ENCODE measurements at regions of chr10 and their contacts with region 1.

Region 1: DNA sequence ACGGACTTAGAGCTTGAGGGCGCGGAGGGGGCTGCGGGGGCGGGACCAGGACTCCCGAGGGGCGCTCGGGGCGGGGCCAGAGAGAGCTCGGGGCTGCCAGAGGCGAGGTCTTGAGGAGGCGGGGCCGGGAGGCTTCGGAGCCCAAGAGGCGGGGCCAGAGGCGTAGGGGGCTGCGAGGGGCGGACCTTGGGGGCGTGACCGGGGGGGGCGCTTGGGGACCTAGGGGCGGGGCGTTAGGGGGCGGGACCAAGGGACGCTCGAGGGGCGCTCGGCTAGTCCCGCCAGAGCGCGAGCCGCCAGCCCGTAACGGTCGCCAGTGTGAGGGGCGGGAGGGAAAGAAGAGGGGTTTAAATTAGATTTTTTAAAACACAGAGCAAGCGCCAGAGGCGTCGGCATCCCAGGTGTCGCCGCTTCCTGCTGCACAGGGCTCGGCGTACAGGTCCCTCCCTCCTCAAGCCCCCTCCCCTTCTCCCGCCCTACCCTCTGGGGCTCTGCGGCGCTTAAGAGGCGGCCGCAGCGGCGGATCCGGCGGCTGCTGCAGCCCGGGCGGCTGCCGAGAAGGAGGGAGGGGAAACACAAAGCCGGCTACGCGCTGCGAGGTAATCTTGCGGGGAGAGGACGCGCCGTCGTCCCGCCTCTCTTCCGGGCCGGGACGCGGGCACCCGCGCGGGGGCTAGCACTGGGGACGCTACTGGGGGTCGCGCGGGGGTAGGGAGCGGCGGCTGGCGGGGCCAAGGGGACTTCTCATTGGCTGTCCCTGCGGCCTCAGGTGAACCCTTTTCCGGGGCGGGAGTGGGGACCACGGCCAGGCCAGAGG is at the start of gene ADD3:
- DNase-seq: peak; percentile 95
- ATAC-seq: peak; percentile 86
- H3K4me3 ChIP-seq: peak within 1 kb of the TSS; percentile 73 to 95 (median 76)
- H3K4me3 Mint-ChIP-seq: no peak within 1 kb of the TSS
- H3K27ac ChIP-seq: peak within 1 kb of the TSS; percentile 72 to 91
- H3K27ac Mint-ChIP-seq: no peak within 1 kb of the TSS
- H3K4me1 ChIP-seq: peaks cover 33 to 40% of the 10 kb centered on the region in 2 donors
- H3K4me1 Mint-ChIP-seq: peaks cover 49% of the 10 kb centered on the region
- H3K27me3 ChIP-seq: no peaks in the 10 kb centered on the region
- H3K27me3 Mint-ChIP-seq: no peaks in the 10 kb centered on the region
- CTCF ChIP-seq: no peak
- total RNA-seq, gene ADD3: 156 and 191 TPM in 2 replicates

Region 2: GRCh38 chr10:109624939-109625338 is 383.0 kb before region 1 on chr10:
- CTCF ChIA-PET with region 1: no interaction called
- POLR2A ChIA-PET with region 1: no interaction called
- intact Hi-C with region 1: no loop called
- DNase-seq: no peak
- ATAC-seq: no peak
- H3K4me3 ChIP-seq: no peak overlapping the region
- H3K4me3 Mint-ChIP-seq: no peak overlapping the region
- H3K27ac ChIP-seq: no peak overlapping the region
- H3K27ac Mint-ChIP-seq: no peak overlapping the region
- H3K4me1 ChIP-seq: no peaks in the 10 kb centered on the region
- H3K4me1 Mint-ChIP-seq: no peaks in the 10 kb centered on the region
- H3K27me3 ChIP-seq: no peaks in the 10 kb centered on the region
- H3K27me3 Mint-ChIP-seq: no peaks in the 10 kb centered on the region
- CTCF ChIP-seq: no peak

Region 3: GRCh38 chr10:109866168-109866994 is 141.5 kb before region 1 on chr10:
- CTCF ChIA-PET with region 1: no interaction called
- POLR2A ChIA-PET with region 1: no interaction called
- intact Hi-C with region 1: no loop called
- DNase-seq: no peak
- ATAC-seq: no peak
- H3K4me3 ChIP-seq: no peak overlapping the region
- H3K4me3 Mint-ChIP-seq: no peak overlapping the region
- H3K27ac ChIP-seq: no peak overlapping the region
- H3K27ac Mint-ChIP-seq: no peak overlapping the region
- H3K4me1 ChIP-seq: no peaks in the 10 kb centered on the region
- H3K4me1 Mint-ChIP-seq: no peaks in the 10 kb centered on the region
- H3K27me3 ChIP-seq: no peaks in the 10 kb centered on the region
- H3K27me3 Mint-ChIP-seq: no peaks in the 10 kb centered on the region
- CTCF ChIP-seq: no peak

Region 4: GRCh38 chr10:109956454-109957091 is 51.3 kb before region 1 on chr10:
- CTCF ChIA-PET with region 1: no interaction called
- POLR2A ChIA-PET with region 1: no interaction called
- intact Hi-C with region 1: loop called (anchors 2 kb)
- DNase-seq: peak; percentile 62
- ATAC-seq: peak; percentile 85
- H3K4me3 ChIP-seq: no peak overlapping the region
- H3K4me3 Mint-ChIP-seq: peak overlapping the region; percentile 5
- H3K27ac ChIP-seq: no peak overlapping the region
- H3K27ac Mint-ChIP-seq: no peak overlapping the region
- H3K4me1 ChIP-seq: peaks cover 0 to 9% of the 10 kb centered on the region in 2 donors
- H3K4me1 Mint-ChIP-seq: peaks cover 12% of the 10 kb centered on the region
- H3K27me3 ChIP-seq: no peaks in the 10 kb centered on the region
- H3K27me3 Mint-ChIP-seq: no peaks in the 10 kb centered on the region
- CTCF ChIP-seq: peak; percentile 65

Region 5: GRCh38 chr10:109996225-109996624 is 11.7 kb before region 1 on chr10:
- CTCF ChIA-PET with region 1: interaction called, 4 read pairs
- POLR2A ChIA-PET with region 1: interaction called, 4 read pairs
- intact Hi-C with region 1: loop called (anchors 1 kb)
- DNase-seq: peak; percentile 26
- ATAC-seq: no peak
- H3K4me3 ChIP-seq: peak overlapping the region in 2 of 5 experiments; percentile 6 to 42
- H3K4me3 Mint-ChIP-seq: peak overlapping the region; percentile 63
- H3K27ac ChIP-seq: peak overlapping the region in 1 of 2 donors; percentile 62
- H3K27ac Mint-ChIP-seq: peak overlapping the region; percentile 72
- H3K4me1 ChIP-seq: peaks cover 36 to 39% of the 10 kb centered on the region in 2 donors
- H3K4me1 Mint-ChIP-seq: peaks cover 48% of the 10 kb centered on the region
- H3K27me3 ChIP-seq: no peaks in the 10 kb centered on the region
- H3K27me3 Mint-ChIP-seq: no peaks in the 10 kb centered on the region
- CTCF ChIP-seq: no peak

Region 6: GRCh38 chr10:110036640-110037039 is 28.7 kb after region 1 on chr10:
- CTCF ChIA-PET with region 1: no interaction called
- POLR2A ChIA-PET with region 1: no interaction called
- intact Hi-C with region 1: no loop called
- DNase-seq: no peak
- ATAC-seq: no peak
- H3K4me3 ChIP-seq: no peak overlapping the region
- H3K4me3 Mint-ChIP-seq: peak overlapping the region; percentile 59
- H3K27ac ChIP-seq: peak overlapping the region in 1 of 2 donors; percentile 17
- H3K27ac Mint-ChIP-seq: peak overlapping the region; percentile 53
- H3K4me1 ChIP-seq: peaks cover 27% of the 10 kb centered on the region in 2 donors
- H3K4me1 Mint-ChIP-seq: peaks cover 69% of the 10 kb centered on the region
- H3K27me3 ChIP-seq: no peaks in the 10 kb centered on the region
- H3K27me3 Mint-ChIP-seq: no peaks in the 10 kb centered on the region
- CTCF ChIP-seq: no peak

Region 7: GRCh38 chr10:110076559-110077318 is 68.8 kb after region 1 on chr10:
- CTCF ChIA-PET with region 1: interaction called, 7 read pairs
- POLR2A ChIA-PET with region 1: interaction called, 12 read pairs
- intact Hi-C with region 1: loop called (anchors 2 kb)
- DNase-seq: peak; percentile 42
- ATAC-seq: peak; percentile 67
- H3K4me3 ChIP-seq: peak overlapping the region; percentile 45 to 69 (median 59)
- H3K4me3 Mint-ChIP-seq: peak overlapping the region; percentile 94
- H3K27ac ChIP-seq: peak overlapping the region; percentile 74 to 86
- H3K27ac Mint-ChIP-seq: peak overlapping the region; percentile 99
- H3K4me1 ChIP-seq: peaks cover 56 to 67% of the 10 kb centered on the region in 2 donors
- H3K4me1 Mint-ChIP-seq: peaks cover 76% of the 10 kb centered on the region
- H3K27me3 ChIP-seq: no peaks in the 10 kb centered on the region
- H3K27me3 Mint-ChIP-seq: no peaks in the 10 kb centered on the region
- CTCF ChIP-seq: no peak

Region 8: GRCh38 chr10:110225756-110226542 is 218.0 kb after region 1 on chr10:
- CTCF ChIA-PET with region 1: no interaction called
- POLR2A ChIA-PET with region 1: no interaction called
- intact Hi-C with region 1: loop called (anchors 1 kb)
- DNase-seq: peak; percentile 95
- ATAC-seq: peak; percentile 53
- H3K4me3 ChIP-seq: peak overlapping the region; percentile 42 to 90 (median 77)
- H3K4me3 Mint-ChIP-seq: peak overlapping the region; percentile 97
- H3K27ac ChIP-seq: peak overlapping the region; percentile 79 to 84
- H3K27ac Mint-ChIP-seq: peak overlapping the region; percentile 97
- H3K4me1 ChIP-seq: peaks cover 22 to 25% of the 10 kb centered on the region in 2 donors
- H3K4me1 Mint-ChIP-seq: peaks cover 38% of the 10 kb centered on the region
- H3K27me3 ChIP-seq: peaks cover 0 to 5% (median 2%) of the 10 kb centered on the region in 4 experiments
- H3K27me3 Mint-ChIP-seq: peaks cover 3% of the 10 kb centered on the region
- CTCF ChIP-seq: peak; percentile 65

Region 9: GRCh38 chr10:110260746-110261477 is 253.0 kb after region 1 on chr10:
- CTCF ChIA-PET with region 1: no interaction called
- POLR2A ChIA-PET with region 1: no interaction called
- intact Hi-C with region 1: no loop called
- DNase-seq: no peak
- ATAC-seq: no peak
- H3K4me3 ChIP-seq: no peak overlapping the region
- H3K4me3 Mint-ChIP-seq: no peak overlapping the region
- H3K27ac ChIP-seq: no peak overlapping the region
- H3K27ac Mint-ChIP-seq: no peak overlapping the region
- H3K4me1 ChIP-seq: no peaks in the 10 kb centered on the region
- H3K4me1 Mint-ChIP-seq: no peaks in the 10 kb centered on the region
- H3K27me3 ChIP-seq: no peaks in the 10 kb centered on the region
- H3K27me3 Mint-ChIP-seq: no peaks in the 10 kb centered on the region
- CTCF ChIP-seq: no peak

Region 10: GRCh38 chr10:110567201-110568054 is 559.5 kb after region 1 on chr10 and contains the start of gene SMC3:
- CTCF ChIA-PET with region 1: no interaction called
- POLR2A ChIA-PET with region 1: no interaction called
- intact Hi-C with region 1: loop called (anchors 5 kb)
- DNase-seq: peak; percentile 98
- ATAC-seq: peak; percentile 89
- H3K4me3 ChIP-seq: peak within 1 kb of the TSS; percentile 82 to 92 (median 90)
- H3K4me3 Mint-ChIP-seq: peak within 1 kb of the TSS; percentile 91
- H3K27ac ChIP-seq: peak within 1 kb of the TSS; percentile 73 to 90
- H3K27ac Mint-ChIP-seq: peak within 1 kb of the TSS; percentile 98
- H3K4me1 ChIP-seq: peaks cover 24 to 27% of the 10 kb centered on the region in 2 donors
- H3K4me1 Mint-ChIP-seq: peaks cover 31% of the 10 kb centered on the region
- H3K27me3 ChIP-seq: peaks cover 0 to 8% (median 5%) of the 10 kb centered on the region in 4 experiments
- H3K27me3 Mint-ChIP-seq: peaks cover 5% of the 10 kb centered on the region
- CTCF ChIP-seq: no peak
- total RNA-seq, gene SMC3: 44.6 and 45.8 TPM in 2 replicates

Region 11: DNA sequence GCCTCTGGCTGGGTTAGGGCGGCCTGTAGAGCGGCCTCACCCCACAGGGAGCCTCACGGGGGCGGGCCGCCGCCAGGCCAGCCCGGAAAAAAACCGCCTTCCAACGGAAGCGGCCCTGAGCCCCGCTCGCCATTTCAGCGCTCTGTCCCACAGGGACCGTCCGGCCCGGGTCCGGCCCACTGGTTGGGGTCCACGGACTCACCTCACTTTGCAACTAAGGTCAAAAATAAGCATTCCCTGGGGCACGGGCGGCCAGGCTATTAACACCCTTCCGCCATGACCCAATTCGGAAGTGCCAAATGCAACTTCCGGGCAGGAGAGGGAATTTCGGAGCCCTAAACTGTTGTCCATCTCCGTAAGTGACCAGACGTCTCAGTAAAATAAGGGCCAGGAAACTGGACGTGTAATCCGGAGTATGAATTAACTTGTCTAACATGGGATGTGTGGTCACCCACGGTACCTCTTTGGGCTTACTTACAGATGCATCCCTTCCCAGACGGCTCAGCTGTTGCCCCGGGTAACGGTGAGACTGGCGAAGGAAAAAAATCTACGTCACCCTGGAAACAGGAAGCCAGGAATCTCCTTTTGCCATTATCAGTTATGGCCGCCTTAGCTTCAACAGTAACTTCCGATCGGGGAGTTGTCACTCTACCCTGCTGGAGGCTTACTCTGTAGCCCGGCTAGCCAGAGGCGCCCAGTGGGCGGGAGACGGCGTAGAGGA is 910.9 kb after region 1 on chr10 and contains the start of gene BBIP1:
- CTCF ChIA-PET with region 1: no interaction called
- POLR2A ChIA-PET with region 1: no interaction called
- intact Hi-C with region 1: loop called (anchors 2 kb)
- DNase-seq: peak; percentile 99
- ATAC-seq: peak; percentile 85
- H3K4me3 ChIP-seq: peak within 1 kb of the TSS; percentile 78 to 100 (median 97)
- H3K4me3 Mint-ChIP-seq: peak within 1 kb of the TSS; percentile 98
- H3K27ac ChIP-seq: peak within 1 kb of the TSS; percentile 95 to 99
- H3K27ac Mint-ChIP-seq: peak within 1 kb of the TSS; percentile 100
- H3K4me1 ChIP-seq: peaks cover 16 to 33% of the 10 kb centered on the region in 2 donors
- H3K4me1 Mint-ChIP-seq: peaks cover 49% of the 10 kb centered on the region
- H3K27me3 ChIP-seq: no peaks in the 10 kb centered on the region
- H3K27me3 Mint-ChIP-seq: no peaks in the 10 kb centered on the region
- CTCF ChIP-seq: no peak
- total RNA-seq, gene BBIP1: 35.1 and 46.1 TPM in 2 replicates

Measured in B cell (primary cell).